Heart right ventricle (tissue), 16 donors: ENCODE measurements at regions of chr4 and their contacts with region 1.

Region 1: GRCh38 chr4:65845199-65845773 is 175.0 kb upstream of the EPHA5 start:
- DNase-seq: no peak
- ATAC-seq: no peak
- H3K4me3 ChIP-seq: no peak overlapping the region
- H3K27ac ChIP-seq: no peak overlapping the region
- H3K4me1 ChIP-seq: no peaks in the 10 kb centered on the region
- H3K27me3 ChIP-seq: no peaks in the 10 kb centered on the region
- CTCF ChIP-seq: no peak

Region 2: GRCh38 chr4:65521666-65522065 is 323.6 kb before region 1 on chr4:
- intact Hi-C with region 1: loop called in 1 of 10 experiments (anchors 10 kb)
- DNase-seq: no peak
- ATAC-seq: no peak
- H3K4me3 ChIP-seq: no peak overlapping the region
- H3K27ac ChIP-seq: no peak overlapping the region
- H3K4me1 ChIP-seq: no peaks in the 10 kb centered on the region
- H3K27me3 ChIP-seq: no peaks in the 10 kb centered on the region
- CTCF ChIP-seq: no peak

Region 3: GRCh38 chr4:65960751-65961150 is 115.5 kb after region 1 on chr4:
- intact Hi-C with region 1: no loop called
- DNase-seq: no peak
- ATAC-seq: no peak
- H3K4me3 ChIP-seq: no peak overlapping the region
- H3K27ac ChIP-seq: no peak overlapping the region
- H3K4me1 ChIP-seq: no peaks in the 10 kb centered on the region
- H3K27me3 ChIP-seq: no peaks in the 10 kb centered on the region
- CTCF ChIP-seq: no peak